Posterior vena cava (tissue), 2 donors: ENCODE measurements at regions of chr13 and their contacts with region 1.

Region 1: GRCh38 chr13:19266979-19267378 is 85.4 kb upstream of the TUBA3C start:
- DNase-seq: no peak

Region 2: GRCh38 chr13:19239114-19239860 is 27.7 kb before region 1 on chr13:
- intact Hi-C with region 1: no loop called
- DNase-seq: no peak

Region 3: GRCh38 chr13:19252381-19252780 is 14.6 kb before region 1 on chr13:
- intact Hi-C with region 1: no loop called
- DNase-seq: no peak

Region 4: DNA sequence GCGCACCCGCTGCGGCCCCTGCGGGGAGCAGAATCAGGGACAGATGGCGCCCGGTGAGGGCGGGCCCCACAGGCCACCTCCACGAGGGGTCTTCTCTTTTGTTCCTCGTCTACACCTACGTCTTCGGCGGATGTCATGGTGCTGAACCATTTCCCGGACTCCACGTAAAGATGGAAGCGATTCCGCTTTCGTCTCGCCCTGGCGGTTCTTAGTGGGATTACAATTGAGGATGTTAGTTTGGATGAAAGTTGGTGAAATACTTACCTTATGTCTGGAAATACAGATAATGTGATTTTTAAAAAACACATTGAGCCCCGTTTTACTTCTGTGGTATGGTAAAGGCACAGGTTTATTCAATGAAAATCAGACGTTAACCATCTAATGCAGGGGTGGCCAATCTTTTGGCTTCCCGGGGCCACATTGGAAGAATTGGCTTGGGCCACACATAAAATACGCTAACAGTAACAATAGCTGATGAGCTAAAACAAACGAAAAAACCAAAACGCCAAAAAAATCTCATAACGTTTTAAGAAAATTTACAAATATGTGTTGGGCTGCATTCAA is 597.8 kb after region 1 on chr13:
- intact Hi-C with region 1: loop called in 1 of 2 experiments (anchors 5 kb)
- DNase-seq: peak; percentile 85